ENCODE measurements at regions of chr11 and their contacts with region 1.

Region 1: GRCh38 chr11:60831143-60831500 is 10.8 kb upstream of the CCDC86 start:
- DNase-seq: peak; percentile 61
- ATAC-seq: peak; percentile 95
- H3K4me3 ChIP-seq: no peak overlapping the region
- H3K27ac ChIP-seq: no peak overlapping the region
- H3K4me1 ChIP-seq: peaks cover 12% of the 10 kb centered on the region; the same call in 1 of the 2 replicates
- H3K27me3 ChIP-seq: peaks cover 0 to 14% of the 10 kb centered on the region in 2 experiments; a peak in 2 of 5 replicates
- CTCF ChIP-seq: peak; percentile 94
- EP300 ChIP-seq: no peak
- POLR2A ChIP-seq: no peak
- RAD21 ChIP-seq: peak; percentile 95

Region 2: GRCh38 chr11:60899046-60899936 is 68.2 kb after region 1 on chr11:
- CTCF ChIA-PET with region 1: interaction called, 20 read pairs
- POLR2A ChIA-PET with region 1: no interaction called
- in situ Hi-C with region 1: loop called (anchors 5 kb)
- intact Hi-C with region 1: loop called (anchors 1 kb)
- DNase-seq: peak; percentile 56
- ATAC-seq: peak; percentile 83
- H3K4me3 ChIP-seq: no peak overlapping the region
- H3K27ac ChIP-seq: no peak overlapping the region
- H3K4me1 ChIP-seq: peaks cover 8% of the 10 kb centered on the region
- H3K27me3 ChIP-seq: no peaks in the 10 kb centered on the region
- CTCF ChIP-seq: peak; percentile 86
- EP300 ChIP-seq: no peak
- POLR2A ChIP-seq: 0 out of 4 replicates have a peak, but pooled peaks of 1 of the 2 experiments have one; percentile 22
- RAD21 ChIP-seq: peak; percentile 51